ENCODE measurements at regions of chr6 and their contacts with region 1.

Region 1: GRCh38 chr6:79525272-79526100 is 11.7 kb downstream of the LCA5 start:
- DNase-seq: peak; percentile 86
- H3K4me3 Mint-ChIP-seq: peak overlapping the region; percentile 62
- H3K27ac Mint-ChIP-seq: peak overlapping the region; percentile 95
- H3K4me1 Mint-ChIP-seq: peaks cover 57% of the 10 kb centered on the region
- H3K27me3 Mint-ChIP-seq: no peaks in the 10 kb centered on the region
- CTCF ChIP-seq: no peak

Region 2: DNA sequence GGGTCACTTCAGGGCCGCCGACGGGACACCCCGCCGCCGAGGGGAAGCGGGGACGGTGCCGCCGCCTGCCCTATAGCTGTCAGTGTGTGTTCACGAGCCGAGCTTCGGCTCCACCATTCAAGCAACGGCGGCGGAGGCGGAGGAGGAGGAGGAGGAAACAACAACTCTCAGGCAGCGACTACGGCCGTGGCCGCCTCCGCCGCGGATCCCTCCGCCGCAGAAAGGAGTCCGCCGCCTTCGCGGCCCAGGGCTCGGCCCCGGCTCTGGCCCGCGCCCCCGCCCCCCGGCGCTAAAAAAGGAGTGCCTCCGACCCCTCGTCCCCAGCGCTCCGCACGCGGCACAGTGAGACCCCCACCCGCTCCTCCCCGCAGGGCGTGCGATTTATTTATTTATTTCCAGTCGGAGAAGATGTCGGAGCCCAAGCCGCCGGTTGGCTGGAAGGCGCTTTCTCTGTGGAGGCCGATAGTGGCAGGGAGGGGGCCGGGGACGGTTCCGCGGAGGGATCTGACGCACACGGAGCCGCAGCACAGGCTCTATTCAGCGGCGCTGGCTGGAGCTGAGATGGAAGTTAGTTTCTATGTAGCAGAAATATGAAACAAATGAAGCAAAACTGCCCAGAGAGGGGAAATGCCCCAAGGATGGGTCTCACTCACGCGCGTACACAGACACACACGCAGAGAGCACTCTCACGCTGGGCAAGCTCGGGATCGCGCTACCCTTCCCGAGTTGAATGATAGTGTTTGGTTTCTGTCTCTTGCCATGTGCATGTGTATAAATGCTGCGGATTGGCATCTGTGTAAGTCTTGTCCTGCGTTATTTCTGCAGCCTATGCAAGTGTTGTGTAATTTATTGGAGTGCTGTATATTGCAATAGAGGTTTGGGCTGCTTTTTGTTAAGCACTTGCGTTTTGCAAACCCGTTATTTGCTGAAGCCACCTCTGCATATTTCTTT is 447.1 kb before region 1 on chr6 and contains the start of gene PHIP:
- CTCF ChIA-PET with region 1: no interaction called
- intact Hi-C with region 1: loop called (anchors 5 kb)
- DNase-seq: peak; percentile 92
- H3K4me3 Mint-ChIP-seq: peak within 1 kb of the TSS; percentile 92
- H3K27ac Mint-ChIP-seq: peak within 1 kb of the TSS; percentile 92
- H3K4me1 Mint-ChIP-seq: no peaks in the 10 kb centered on the region
- H3K27me3 Mint-ChIP-seq: no peaks in the 10 kb centered on the region
- CTCF ChIP-seq: no peak
- total RNA-seq, gene PHIP: 43.3 and 50.8 TPM in 2 replicates

Region 3: DNA sequence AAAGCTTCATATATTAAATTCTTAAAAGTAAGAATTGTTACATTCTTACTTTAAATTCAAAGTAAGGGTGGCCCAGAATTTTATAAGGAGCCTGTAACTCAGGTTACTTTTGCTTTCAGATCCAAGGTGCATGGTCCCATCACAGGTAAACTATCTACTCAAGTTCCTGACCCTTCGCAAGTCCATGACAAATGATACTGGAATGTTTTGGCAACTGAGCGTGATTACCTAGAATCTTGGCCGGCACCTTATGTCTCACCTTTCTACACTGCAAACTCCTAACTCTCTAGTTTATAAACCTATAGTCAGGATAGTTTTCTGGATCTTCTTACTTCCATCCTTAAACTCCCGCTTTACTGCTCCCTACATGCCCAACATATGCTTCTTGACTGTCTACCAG is 223.1 kb before region 1 on chr6:
- CTCF ChIA-PET with region 1: no interaction called
- intact Hi-C with region 1: loop called (anchors 5 kb)
- DNase-seq: peak; percentile 44
- H3K4me3 Mint-ChIP-seq: no peak overlapping the region
- H3K27ac Mint-ChIP-seq: peak overlapping the region; percentile 72
- H3K4me1 Mint-ChIP-seq: peaks cover 60% of the 10 kb centered on the region
- H3K27me3 Mint-ChIP-seq: no peaks in the 10 kb centered on the region
- CTCF ChIP-seq: no peak

Region 4: GRCh38 chr6:79377888-79378348 is 147.6 kb before region 1 on chr6:
- CTCF ChIA-PET with region 1: no interaction called
- intact Hi-C with region 1: loop called (anchors 10 kb)
- DNase-seq: peak; percentile 29
- H3K4me3 Mint-ChIP-seq: peak overlapping the region; percentile 11
- H3K27ac Mint-ChIP-seq: peak overlapping the region; percentile 78
- H3K4me1 Mint-ChIP-seq: peaks cover 42% of the 10 kb centered on the region
- H3K27me3 Mint-ChIP-seq: no peaks in the 10 kb centered on the region
- CTCF ChIP-seq: no peak

Region 5: GRCh38 chr6:79570129-79571029 is 44.9 kb after region 1 on chr6:
- CTCF ChIA-PET with region 1: no interaction called
- intact Hi-C with region 1: loop called (anchors 2 kb)
- DNase-seq: peak; percentile 87
- H3K4me3 Mint-ChIP-seq: peak overlapping the region; percentile 37
- H3K27ac Mint-ChIP-seq: peak overlapping the region; percentile 98
- H3K4me1 Mint-ChIP-seq: peaks cover 70% of the 10 kb centered on the region
- H3K27me3 Mint-ChIP-seq: no peaks in the 10 kb centered on the region
- CTCF ChIP-seq: peak; percentile 53

Region 6: GRCh38 chr6:79630883-79631692 is 105.6 kb after region 1 on chr6 and contains the start of gene SH3BGRL2:
- CTCF ChIA-PET with region 1: no interaction called
- intact Hi-C with region 1: loop called (anchors 1 kb)
- DNase-seq: peak; percentile 84
- H3K4me3 Mint-ChIP-seq: peak within 1 kb of the TSS; percentile 95
- H3K27ac Mint-ChIP-seq: peak within 1 kb of the TSS; percentile 89
- H3K4me1 Mint-ChIP-seq: peaks cover 49% of the 10 kb centered on the region
- H3K27me3 Mint-ChIP-seq: no peaks in the 10 kb centered on the region
- CTCF ChIP-seq: no peak
- total RNA-seq, gene SH3BGRL2: 44.3 and 46.1 TPM in 2 replicates

Region 7: GRCh38 chr6:79777713-79778579 is 252.5 kb after region 1 on chr6:
- CTCF ChIA-PET with region 1: no interaction called
- intact Hi-C with region 1: no loop called
- DNase-seq: peak; percentile 91
- H3K4me3 Mint-ChIP-seq: peak overlapping the region; percentile 64
- H3K27ac Mint-ChIP-seq: no peak overlapping the region
- H3K4me1 Mint-ChIP-seq: no peaks in the 10 kb centered on the region
- H3K27me3 Mint-ChIP-seq: no peaks in the 10 kb centered on the region
- CTCF ChIP-seq: peak; percentile 98